ENCODE measurements at regions of chr1 and their contacts with region 1.

Region 1: DNA sequence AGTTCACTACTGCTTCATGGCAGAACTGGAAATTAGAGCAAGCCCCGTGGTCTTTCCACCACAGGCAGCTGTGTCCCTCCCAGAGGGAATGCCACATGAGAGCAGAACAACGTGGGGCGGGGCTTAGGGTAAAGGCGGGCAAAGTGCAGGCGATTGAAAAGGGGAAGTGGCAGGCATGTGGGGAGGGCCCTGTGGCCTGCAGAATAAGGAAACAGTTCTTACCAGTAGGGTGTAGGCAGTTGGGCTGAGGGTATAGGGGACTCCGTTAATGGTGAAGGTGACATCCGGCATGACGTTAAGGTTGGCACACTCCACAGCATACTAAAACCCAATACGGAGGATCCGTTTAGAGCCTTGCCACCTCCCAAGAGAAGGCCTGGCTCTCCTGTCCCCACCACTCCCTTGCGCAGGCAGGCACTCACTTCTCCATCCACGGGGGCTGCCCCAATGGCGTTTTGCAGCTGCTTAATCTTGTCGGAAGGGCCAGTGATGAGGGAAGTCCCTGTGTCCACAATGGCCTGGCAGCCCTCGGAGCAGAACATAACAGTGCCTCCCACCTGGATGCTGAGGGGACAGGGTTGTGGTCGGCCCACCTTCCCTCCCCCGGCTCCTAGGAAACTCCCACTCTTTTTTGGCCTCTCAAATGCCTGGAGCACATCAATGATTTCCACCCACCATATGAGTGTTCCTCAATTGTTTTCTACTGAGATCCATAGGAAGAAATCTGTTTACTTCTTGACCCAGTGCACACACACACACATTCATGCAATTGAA is 9.1 kb upstream of the RAB7B start:
- DNase-seq: no peak
- ATAC-seq: 0 out of 2 replicates have a peak, but pooled peaks have one; percentile 42
- H3K4me3 ChIP-seq: no peak overlapping the region
- H3K27ac ChIP-seq: no peak overlapping the region
- H3K4me1 ChIP-seq: peaks cover 0 to 2% of the 10 kb centered on the region in 2 experiments; a peak in 1 of 4 replicates
- H3K27me3 ChIP-seq: no peaks in the 10 kb centered on the region
- CTCF ChIP-seq: no peak
- POLR2A ChIP-seq: no peak
- RAD21 ChIP-seq: no peak

Region 2: GRCh38 chr1:206025283-206025820 is 13.1 kb after region 1 on chr1:
- CTCF ChIA-PET with region 1: interaction called, 4 read pairs
- POLR2A ChIA-PET with region 1: no interaction called
- RAD21 ChIA-PET with region 1: no interaction called
- intact Hi-C with region 1: loop called (anchors 1 kb)
- DNase-seq: no peak
- ATAC-seq: no peak
- H3K4me3 ChIP-seq: no peak overlapping the region
- H3K27ac ChIP-seq: no peak overlapping the region
- H3K4me1 ChIP-seq: peaks cover 5 to 18% of the 10 kb centered on the region in 2 experiments; a peak in 2 of 4 replicates
- H3K27me3 ChIP-seq: no peaks in the 10 kb centered on the region
- CTCF ChIP-seq: no peak
- POLR2A ChIP-seq: no peak
- RAD21 ChIP-seq: no peak

Region 3: GRCh38 chr1:206128196-206128595 is 115.9 kb after region 1 on chr1:
- CTCF ChIA-PET with region 1: no interaction called
- POLR2A ChIA-PET with region 1: no interaction called
- RAD21 ChIA-PET with region 1: no interaction called
- intact Hi-C with region 1: no loop called
- DNase-seq: no peak
- ATAC-seq: no peak
- H3K4me3 ChIP-seq: no peak overlapping the region
- H3K27ac ChIP-seq: no peak overlapping the region
- H3K4me1 ChIP-seq: no peaks in the 10 kb centered on the region
- H3K27me3 ChIP-seq: no peaks in the 10 kb centered on the region
- CTCF ChIP-seq: no peak
- POLR2A ChIP-seq: no peak
- RAD21 ChIP-seq: no peak

Measured in HCT116 (cell line).